CD4-positive, alpha-beta T cell (primary cell): ENCODE measurements at regions of chr5 and their contacts with region 1.

Region 1: GRCh38 chr5:62460578-62460983 is 48.0 kb downstream of the IPO11 start:
- DNase-seq: peak in 3 of 14 experiments; percentile 39 to 58 (median 52)
- ATAC-seq: no peak
- H3K4me3 ChIP-seq: no peak overlapping the region
- H3K4me3 Mint-ChIP-seq: no peak overlapping the region
- H3K27ac ChIP-seq: no peak overlapping the region
- H3K27ac Mint-ChIP-seq: no peak overlapping the region
- H3K4me1 ChIP-seq: no peaks in the 10 kb centered on the region
- H3K4me1 Mint-ChIP-seq: peaks cover 8% of the 10 kb centered on the region
- H3K27me3 ChIP-seq: no peaks in the 10 kb centered on the region
- H3K27me3 Mint-ChIP-seq: no peaks in the 10 kb centered on the region
- CTCF ChIP-seq: peak; percentile 94

Region 2: DNA sequence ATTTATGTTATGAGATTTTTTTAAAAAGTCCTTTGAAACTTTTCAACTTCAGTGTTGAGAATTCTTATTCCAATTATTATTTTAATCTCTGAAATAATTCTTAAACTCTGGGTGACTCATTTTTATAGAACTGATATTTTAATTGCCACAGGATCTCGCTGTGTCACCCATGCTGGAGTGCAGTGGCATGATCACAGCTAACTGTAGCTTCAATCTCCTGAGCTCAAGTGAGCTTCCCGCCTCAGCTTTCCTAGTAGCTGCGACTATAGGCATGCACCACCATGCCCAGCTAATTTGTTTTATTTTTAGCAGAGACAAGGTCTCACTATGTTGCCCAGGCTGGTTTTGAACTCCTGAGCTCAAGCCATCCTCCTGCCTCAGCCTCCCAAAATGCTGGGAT is 97.9 kb before region 1 on chr5:
- CTCF ChIA-PET with region 1: no interaction called
- POLR2A ChIA-PET with region 1: no interaction called
- intact Hi-C with region 1: no loop called
- DNase-seq: no peak
- ATAC-seq: no peak
- H3K4me3 ChIP-seq: no peak overlapping the region
- H3K4me3 Mint-ChIP-seq: no peak overlapping the region
- H3K27ac ChIP-seq: no peak overlapping the region
- H3K27ac Mint-ChIP-seq: no peak overlapping the region
- H3K4me1 ChIP-seq: no peaks in the 10 kb centered on the region
- H3K4me1 Mint-ChIP-seq: no peaks in the 10 kb centered on the region
- H3K27me3 ChIP-seq: no peaks in the 10 kb centered on the region
- H3K27me3 Mint-ChIP-seq: no peaks in the 10 kb centered on the region
- CTCF ChIP-seq: no peak

Region 3: GRCh38 chr5:62631909-62632580 is 171.5 kb after region 1 on chr5:
- CTCF ChIA-PET with region 1: interaction called, 3 read pairs
- POLR2A ChIA-PET with region 1: no interaction called
- intact Hi-C with region 1: loop called (anchors 1 to 5 kb)
- DNase-seq: peak in 2 of 14 experiments; percentile 15 to 18
- ATAC-seq: no peak
- H3K4me3 ChIP-seq: no peak overlapping the region
- H3K4me3 Mint-ChIP-seq: no peak overlapping the region
- H3K27ac ChIP-seq: no peak overlapping the region
- H3K27ac Mint-ChIP-seq: no peak overlapping the region
- H3K4me1 ChIP-seq: no peaks in the 10 kb centered on the region
- H3K4me1 Mint-ChIP-seq: no peaks in the 10 kb centered on the region
- H3K27me3 ChIP-seq: no peaks in the 10 kb centered on the region
- H3K27me3 Mint-ChIP-seq: no peaks in the 10 kb centered on the region
- CTCF ChIP-seq: peak; percentile 30

Region 4: DNA sequence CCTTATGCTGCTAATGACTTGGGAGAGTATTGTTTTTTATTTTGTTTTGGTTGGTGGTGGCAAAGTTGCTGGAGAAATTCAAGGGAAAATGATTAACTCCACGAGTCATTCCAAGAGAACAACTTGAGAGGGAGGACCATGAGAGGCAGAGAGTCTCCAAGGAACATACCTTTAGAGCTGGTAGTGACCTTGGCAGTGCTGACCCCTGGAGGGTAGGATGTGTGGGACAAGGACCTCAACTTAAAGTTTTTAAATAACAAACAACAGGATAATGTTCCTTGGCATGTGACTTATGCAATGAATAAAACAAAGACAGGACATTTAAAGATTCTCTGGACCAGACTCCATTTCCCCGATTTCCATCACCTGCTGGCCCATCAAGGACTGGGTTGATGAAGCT is 257.8 kb after region 1 on chr5:
- CTCF ChIA-PET with region 1: no interaction called
- POLR2A ChIA-PET with region 1: no interaction called
- intact Hi-C with region 1: loop called in 1 of 2 experiments (anchors 5 kb)
- DNase-seq: peak in 2 of 14 experiments; percentile 3 to 6
- ATAC-seq: no peak
- H3K4me3 ChIP-seq: no peak overlapping the region
- H3K4me3 Mint-ChIP-seq: no peak overlapping the region
- H3K27ac ChIP-seq: no peak overlapping the region
- H3K27ac Mint-ChIP-seq: no peak overlapping the region
- H3K4me1 ChIP-seq: no peaks in the 10 kb centered on the region
- H3K4me1 Mint-ChIP-seq: no peaks in the 10 kb centered on the region
- H3K27me3 ChIP-seq: peaks cover 0 to 9% of the 10 kb centered on the region in 2 experiments
- H3K27me3 Mint-ChIP-seq: peaks cover 30% of the 10 kb centered on the region
- CTCF ChIP-seq: no peak

Region 5: DNA sequence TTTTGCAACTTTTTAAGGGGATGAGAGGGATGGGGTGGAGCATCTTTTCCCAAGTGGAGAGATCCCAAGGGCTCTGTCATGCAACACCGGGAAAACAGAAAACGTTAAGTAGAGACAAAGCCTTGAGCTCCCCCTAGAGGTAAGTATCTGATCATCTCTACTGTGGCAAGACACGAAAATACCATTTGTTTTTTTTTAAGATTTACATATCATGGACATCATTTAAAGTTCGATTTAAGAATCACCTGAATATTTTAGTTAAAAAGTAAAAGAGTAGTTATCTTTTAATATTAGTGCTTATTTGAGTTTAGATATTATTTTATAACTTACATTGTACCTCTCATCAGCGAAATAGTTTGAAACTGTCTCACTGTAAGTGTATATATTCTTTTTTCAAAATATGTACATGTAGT is 318.4 kb after region 1 on chr5:
- CTCF ChIA-PET with region 1: interaction called, 3 read pairs
- POLR2A ChIA-PET with region 1: no interaction called
- intact Hi-C with region 1: loop called (anchors 1 kb)
- DNase-seq: peak in 3 of 14 experiments; percentile 40 to 58 (median 53)
- ATAC-seq: no peak
- H3K4me3 ChIP-seq: no peak overlapping the region
- H3K4me3 Mint-ChIP-seq: no peak overlapping the region
- H3K27ac ChIP-seq: no peak overlapping the region
- H3K27ac Mint-ChIP-seq: no peak overlapping the region
- H3K4me1 ChIP-seq: no peaks in the 10 kb centered on the region
- H3K4me1 Mint-ChIP-seq: no peaks in the 10 kb centered on the region
- H3K27me3 ChIP-seq: no peaks in the 10 kb centered on the region
- H3K27me3 Mint-ChIP-seq: peaks cover 7% of the 10 kb centered on the region
- CTCF ChIP-seq: peak; percentile 70